Activated T-helper 1 cell treated with anti-CD3 and anti-CD28 coated beads, Interleukin-12 subunit alpha, Interleukin-12 subunit beta, Interleukin-2, Interleukin-4 antibody, amounts not matched to agents 30 ng/mL and 10 ng/mL and 1 ng/mL, durations not matched to agents 14 hours and 24 hours and 36 hours (primary cell): ENCODE measurements at regions of chr3 and their contacts with region 1.

Region 1: GRCh38 chr3:119600732-119601131 is 3.0 kb downstream of the PLA1A start:
- DNase-seq: no peak
- H3K4me3 Mint-ChIP-seq: no peak overlapping the region
- H3K27ac Mint-ChIP-seq: peak overlapping the region; percentile 61
- H3K4me1 Mint-ChIP-seq: peaks cover 41% of the 10 kb centered on the region
- H3K27me3 Mint-ChIP-seq: no peaks in the 10 kb centered on the region

Region 2: GRCh38 chr3:119579366-119580165 is 21.2 kb before region 1 on chr3 and contains the start of gene ADPRH:
- intact Hi-C with region 1: loop called (anchors 2 kb)
- DNase-seq: peak; percentile 47
- H3K4me3 Mint-ChIP-seq: peak within 1 kb of the TSS; percentile 90
- H3K27ac Mint-ChIP-seq: peak within 1 kb of the TSS; percentile 95
- H3K4me1 Mint-ChIP-seq: peaks cover 37% of the 10 kb centered on the region
- H3K27me3 Mint-ChIP-seq: peaks cover 6% of the 10 kb centered on the region
- total RNA-seq, gene ADPRH: 3.8 and 4.6 TPM in 2 replicates